PC-3 (cell line): ENCODE measurements at regions of chr17 and their contacts with region 1.

Region 1: DNA sequence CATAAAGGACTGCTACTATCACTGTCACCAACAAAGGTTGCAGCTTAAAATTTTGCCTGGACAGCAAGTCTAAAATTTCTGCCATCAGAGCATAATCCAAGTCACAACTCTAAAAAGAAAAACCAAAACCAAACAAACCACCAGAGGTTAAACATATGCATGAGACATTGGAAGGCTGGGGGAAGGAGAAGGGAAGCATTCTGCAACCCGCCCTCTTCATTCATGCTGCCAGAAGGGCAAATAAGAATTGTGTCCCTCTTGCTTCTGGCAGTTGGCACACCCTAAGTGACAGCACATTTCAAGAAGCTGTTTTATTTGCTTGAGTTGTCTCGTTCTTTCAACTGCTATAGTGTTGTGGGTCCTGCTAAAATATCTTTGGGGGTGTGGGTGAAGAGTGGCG is 99.6 kb downstream of the SKAP1 start:
- DNase-seq: peak; percentile 62
- ATAC-seq: peak; percentile 79
- H3K4me3 ChIP-seq: no peak overlapping the region
- H3K27ac ChIP-seq: no peak overlapping the region
- H3K4me1 ChIP-seq: peaks cover 21% of the 10 kb centered on the region
- H3K27me3 ChIP-seq: no peaks in the 10 kb centered on the region; the same call in 1 of the 2 replicates
- CTCF ChIP-seq: no peak

Region 2: DNA sequence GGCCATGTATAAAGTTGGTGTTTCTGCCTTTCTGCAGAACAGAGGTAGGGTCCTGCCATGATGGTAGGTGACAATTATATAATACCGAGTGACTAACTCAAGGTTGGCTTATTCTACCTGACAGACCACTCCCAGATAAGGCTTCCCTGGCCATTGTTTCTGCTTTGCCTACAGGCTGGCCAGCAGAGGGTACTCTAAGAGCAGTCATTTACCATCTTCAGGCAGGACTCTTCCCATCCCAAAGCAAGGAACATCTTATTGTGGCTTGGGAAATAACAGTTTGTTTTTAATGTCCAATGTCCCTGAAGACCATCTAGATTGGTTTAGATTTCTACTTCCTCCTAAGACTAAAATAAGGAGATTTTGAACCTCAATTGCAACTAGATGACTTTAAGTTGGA is 148.7 kb before region 1 on chr17:
- CTCF ChIA-PET with region 1: no interaction called
- POLR2A ChIA-PET with region 1: no interaction called
- intact Hi-C with region 1: loop called (anchors 1 kb)
- DNase-seq: peak; percentile 69
- ATAC-seq: peak; percentile 77
- H3K4me3 ChIP-seq: no peak overlapping the region
- H3K27ac ChIP-seq: no peak overlapping the region
- H3K4me1 ChIP-seq: peaks cover 11% of the 10 kb centered on the region
- H3K27me3 ChIP-seq: peaks cover 10% of the 10 kb centered on the region; the same call in 1 of the 2 replicates
- CTCF ChIP-seq: peak; percentile 92